Heart right ventricle (tissue), 16 donors: ENCODE measurements at regions of chrX and their contacts with region 1.

Region 1: GRCh38 chrX:94751611-94752010 is 1077.6 kb downstream of the FAM133A start:
- DNase-seq: no peak
- ATAC-seq: no peak
- H3K4me3 ChIP-seq: no peak overlapping the region
- H3K27ac ChIP-seq: no peak overlapping the region
- H3K4me1 ChIP-seq: no peaks in the 10 kb centered on the region
- H3K27me3 ChIP-seq: peaks cover 0 to 12% (median 0%) of the 10 kb centered on the region in 7 donors
- CTCF ChIP-seq: no peak

Region 2: GRCh38 chrX:96707804-96708203 is 1956.2 kb after region 1 on chrX:
- intact Hi-C with region 1: loop called in 1 of 10 experiments (anchors 5 kb)
- DNase-seq: no peak
- ATAC-seq: peak in 1 of 8 donors; percentile 49
- H3K4me3 ChIP-seq: no peak overlapping the region
- H3K27ac ChIP-seq: no peak overlapping the region
- H3K4me1 ChIP-seq: peaks cover 0 to 26% (median 5%) of the 10 kb centered on the region in 9 donors
- H3K27me3 ChIP-seq: no peaks in the 10 kb centered on the region
- CTCF ChIP-seq: no peak